Activated CD4-positive, alpha-beta memory T cell treated with anti-CD3 and anti-CD28 coated beads, Interleukin-2, amount 10 ng/mL, durations not matched to agents 7 days and 5 days (primary cell): ENCODE measurements at regions of chr22 and their contacts with region 1.

Region 1: GRCh38 chr22:50209893-50210292 is 9.1 kb downstream of the SELENOO start:
- DNase-seq: peak; percentile 78
- H3K4me3 Mint-ChIP-seq: no peak overlapping the region
- H3K27ac Mint-ChIP-seq: peak overlapping the region; percentile 1
- H3K4me1 Mint-ChIP-seq: peaks cover 8% of the 10 kb centered on the region
- H3K27me3 Mint-ChIP-seq: no peaks in the 10 kb centered on the region

Region 2: DNA sequence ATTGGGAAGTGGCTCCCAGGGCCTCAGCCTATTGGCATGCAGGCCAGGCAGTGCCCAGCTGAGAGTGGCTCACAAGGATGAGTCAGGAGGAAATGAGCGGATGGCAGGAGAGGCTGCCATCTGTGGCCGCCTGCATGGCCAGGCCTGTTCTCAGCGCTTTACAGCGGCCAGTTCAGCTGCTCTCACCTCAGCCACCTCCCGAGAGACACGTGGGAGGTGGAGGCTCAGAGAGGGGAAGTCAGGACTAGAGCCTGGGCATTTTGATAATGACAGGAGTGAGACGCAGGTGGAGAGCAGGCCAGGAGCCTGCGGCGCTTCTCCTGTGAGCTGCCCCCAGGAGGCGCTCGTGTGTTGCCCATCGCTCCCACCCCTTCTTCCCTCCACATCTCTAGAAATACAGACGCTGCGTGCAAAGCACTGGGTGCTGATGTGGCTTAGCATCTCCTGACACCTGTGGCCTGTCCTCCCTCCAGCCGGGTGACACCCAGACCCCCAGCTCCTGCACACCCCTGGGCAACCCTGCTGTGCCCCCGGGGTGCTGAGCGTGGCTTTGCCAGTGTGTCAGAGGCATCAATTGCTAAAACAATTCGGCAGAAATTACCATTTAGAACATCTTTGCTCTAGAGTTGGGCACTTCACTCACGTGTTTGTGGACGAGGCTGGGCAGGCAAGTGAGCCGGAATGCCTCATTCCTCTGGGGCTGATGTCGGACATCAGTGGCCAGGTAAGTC is 60.7 kb before region 1 on chr22:
- CTCF ChIA-PET with region 1: interaction called, 18 read pairs
- POLR2A ChIA-PET with region 1: interaction called, 5 read pairs
- DNase-seq: peak; percentile 79
- H3K4me3 Mint-ChIP-seq: no peak overlapping the region
- H3K27ac Mint-ChIP-seq: no peak overlapping the region
- H3K4me1 Mint-ChIP-seq: no peaks in the 10 kb centered on the region
- H3K27me3 Mint-ChIP-seq: peaks cover 3% of the 10 kb centered on the region

Region 3: GRCh38 chr22:50190182-50190940 is 19.5 kb before region 1 on chr22:
- CTCF ChIA-PET with region 1: interaction called, 9 read pairs
- POLR2A ChIA-PET with region 1: interaction called, 10 read pairs
- DNase-seq: peak; percentile 87
- H3K4me3 Mint-ChIP-seq: peak overlapping the region; percentile 79
- H3K27ac Mint-ChIP-seq: peak overlapping the region; percentile 95
- H3K4me1 Mint-ChIP-seq: peaks cover 57% of the 10 kb centered on the region
- H3K27me3 Mint-ChIP-seq: no peaks in the 10 kb centered on the region